HEK293T (cell line): ENCODE measurements at regions of chr21 and their contacts with region 1.

Region 1: DNA sequence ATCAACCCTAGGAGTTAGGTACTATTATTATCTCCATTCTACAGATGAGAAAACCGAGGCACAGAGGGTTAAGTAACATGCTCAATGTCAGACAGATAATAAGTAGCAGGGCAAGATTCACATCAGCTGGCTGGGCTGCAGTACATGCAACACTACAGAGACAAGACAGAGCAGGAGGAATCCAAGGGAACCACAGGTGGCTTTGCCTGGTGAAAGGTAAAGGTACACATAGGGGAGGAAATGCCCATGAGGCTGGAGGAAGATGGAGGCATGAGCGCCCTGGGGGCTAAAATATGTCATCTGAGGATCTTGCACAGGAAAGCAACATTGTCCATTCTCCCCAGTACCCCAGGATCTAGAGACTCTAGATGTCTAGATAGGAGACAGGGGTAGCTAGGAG is 8.4 kb downstream of the ZBTB21 start:
- DNase-seq: no peak

Region 2: DNA sequence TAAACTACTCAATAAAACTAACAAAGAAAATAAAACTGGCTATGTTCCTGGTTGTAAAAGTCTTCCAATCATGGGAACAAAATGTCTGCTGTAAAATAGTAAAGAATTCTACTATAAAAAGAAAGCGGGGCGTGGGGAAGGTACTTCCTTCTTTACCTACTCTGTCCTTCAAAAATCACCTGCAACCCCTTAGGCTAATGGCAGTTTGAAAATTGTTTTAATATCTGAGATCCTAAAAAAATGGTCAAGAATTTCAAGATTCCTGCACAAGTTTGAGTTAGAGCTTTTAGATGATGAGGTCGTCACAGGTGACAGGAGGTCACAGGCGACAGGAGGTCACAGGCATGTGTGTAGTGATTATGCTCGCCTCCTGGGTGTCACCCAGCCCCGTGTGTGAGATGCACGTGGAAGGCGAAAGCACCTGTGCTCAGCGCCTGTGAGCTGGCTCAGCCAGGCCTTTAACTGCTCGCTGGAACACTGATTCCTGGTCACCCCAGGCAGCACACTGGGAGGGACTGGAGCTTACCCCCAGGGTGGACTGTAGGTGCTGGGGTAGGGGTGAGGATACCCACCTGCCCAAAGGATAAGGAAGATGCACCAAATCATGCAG is 475.2 kb before region 1 on chr21:
- CTCF ChIA-PET with region 1: no interaction called
- POLR2A ChIA-PET with region 1: no interaction called
- DNase-seq: no peak

Region 3: GRCh38 chr21:41980561-41980960 is 21.2 kb before region 1 on chr21:
- CTCF ChIA-PET with region 1: interaction called, 10 read pairs
- POLR2A ChIA-PET with region 1: no interaction called
- DNase-seq: no peak

Region 4: DNA sequence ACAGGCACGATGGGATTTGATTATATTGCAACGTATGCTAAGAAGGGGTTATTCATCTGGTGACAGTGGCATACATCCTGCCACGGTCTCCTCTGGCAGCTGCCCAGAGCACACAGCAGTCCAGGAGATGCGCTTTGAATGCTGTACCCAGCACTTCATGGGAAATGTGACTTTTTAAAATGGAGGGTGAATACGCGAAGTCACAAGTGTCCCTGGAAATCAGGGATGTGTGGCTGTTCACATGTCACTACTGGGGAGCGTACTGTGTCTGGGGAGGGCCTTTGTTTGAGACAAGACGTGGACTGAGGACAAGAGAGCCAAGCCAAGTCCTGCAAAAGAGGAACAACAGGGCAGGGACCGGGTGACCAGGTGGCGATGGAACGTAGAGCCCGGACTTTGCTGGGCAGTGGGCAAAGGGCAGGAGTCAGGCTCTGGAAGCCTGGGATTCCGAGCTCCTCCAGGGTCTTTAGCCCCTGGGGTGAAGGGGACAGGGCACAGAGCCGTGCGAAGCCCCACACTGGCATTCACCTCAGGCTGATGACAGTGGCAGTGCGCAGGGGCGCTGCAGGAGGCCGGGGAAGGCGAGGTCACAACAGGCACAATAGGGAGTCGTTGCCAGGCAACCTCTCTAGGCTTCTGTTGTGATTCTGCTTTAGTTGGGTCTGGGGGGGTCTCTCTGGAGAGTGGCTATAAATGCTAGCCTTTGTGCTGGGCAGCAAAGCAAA is 19.7 kb after region 1 on chr21:
- CTCF ChIA-PET with region 1: no interaction called
- POLR2A ChIA-PET with region 1: no interaction called
- DNase-seq: no peak